MCF 10A (cell line): ENCODE measurements at regions of chr1 and their contacts with region 1.

Region 1: GRCh38 chr1:62082456-62083363 is 111.9 kb upstream of the L1TD1 start:
- DNase-seq: peak; percentile 55
- H3K4me3 Mint-ChIP-seq: no peak overlapping the region
- H3K27ac Mint-ChIP-seq: no peak overlapping the region
- H3K4me1 Mint-ChIP-seq: no peaks in the 10 kb centered on the region
- H3K27me3 Mint-ChIP-seq: no peaks in the 10 kb centered on the region
- CTCF ChIP-seq: peak; percentile 79

Region 2: DNA sequence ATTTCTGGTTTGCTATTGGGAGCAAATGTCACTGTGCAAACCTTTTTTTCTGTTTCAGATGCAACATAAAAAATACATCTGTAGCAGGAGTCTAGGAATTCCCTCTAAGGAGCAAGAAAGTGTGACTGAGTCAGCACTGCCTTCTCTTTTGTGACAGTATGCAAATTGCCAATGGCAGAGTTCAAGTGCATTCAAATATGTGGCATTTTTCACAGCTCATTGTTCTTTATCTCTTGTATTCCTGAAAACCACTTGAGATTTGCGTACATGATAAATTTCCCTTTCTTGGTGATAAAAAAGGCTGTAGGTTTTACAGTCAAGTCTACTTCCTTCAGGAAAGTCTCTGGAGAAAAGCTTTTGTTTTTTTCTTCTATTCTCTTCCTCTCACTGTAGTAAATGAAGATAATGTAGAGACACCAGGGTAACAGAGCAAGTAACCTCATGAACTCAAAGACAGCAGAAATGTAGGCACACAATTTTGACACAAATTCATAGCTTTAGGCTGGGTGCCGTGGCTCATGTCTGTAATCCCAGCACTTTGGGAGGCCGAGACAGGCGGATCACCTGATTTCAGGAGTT is 17.8 kb before region 1 on chr1:
- CTCF ChIA-PET with region 1: interaction called, 24 read pairs
- POLR2A ChIA-PET with region 1: no interaction called
- intact Hi-C with region 1: no loop called
- DNase-seq: no peak
- H3K4me3 Mint-ChIP-seq: no peak overlapping the region
- H3K27ac Mint-ChIP-seq: no peak overlapping the region
- H3K4me1 Mint-ChIP-seq: no peaks in the 10 kb centered on the region
- H3K27me3 Mint-ChIP-seq: no peaks in the 10 kb centered on the region
- CTCF ChIP-seq: no peak

Region 3: DNA sequence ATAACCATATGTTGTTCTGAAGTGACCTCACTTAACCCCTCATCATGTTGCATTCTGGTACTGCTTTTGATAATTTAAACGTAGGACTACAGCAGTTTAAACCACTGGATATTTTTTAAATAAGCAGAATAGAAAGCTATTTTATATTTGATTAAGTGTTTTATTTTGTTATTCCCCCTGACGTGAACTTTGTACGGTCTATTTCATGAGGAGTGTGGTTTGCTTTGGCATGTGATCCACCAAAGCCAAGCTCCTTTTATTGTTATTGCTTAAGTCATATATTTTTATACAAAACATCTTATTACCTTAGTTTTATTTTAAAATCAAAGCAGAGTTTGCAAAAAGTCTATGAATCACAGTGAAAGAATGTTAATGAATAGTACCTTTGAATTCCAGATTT is 10.6 kb after region 1 on chr1:
- CTCF ChIA-PET with region 1: interaction called, 95 read pairs
- POLR2A ChIA-PET with region 1: interaction called, 6 read pairs
- intact Hi-C with region 1: no loop called
- DNase-seq: no peak
- H3K4me3 Mint-ChIP-seq: no peak overlapping the region
- H3K27ac Mint-ChIP-seq: no peak overlapping the region
- H3K4me1 Mint-ChIP-seq: no peaks in the 10 kb centered on the region
- H3K27me3 Mint-ChIP-seq: no peaks in the 10 kb centered on the region
- CTCF ChIP-seq: no peak

Region 4: DNA sequence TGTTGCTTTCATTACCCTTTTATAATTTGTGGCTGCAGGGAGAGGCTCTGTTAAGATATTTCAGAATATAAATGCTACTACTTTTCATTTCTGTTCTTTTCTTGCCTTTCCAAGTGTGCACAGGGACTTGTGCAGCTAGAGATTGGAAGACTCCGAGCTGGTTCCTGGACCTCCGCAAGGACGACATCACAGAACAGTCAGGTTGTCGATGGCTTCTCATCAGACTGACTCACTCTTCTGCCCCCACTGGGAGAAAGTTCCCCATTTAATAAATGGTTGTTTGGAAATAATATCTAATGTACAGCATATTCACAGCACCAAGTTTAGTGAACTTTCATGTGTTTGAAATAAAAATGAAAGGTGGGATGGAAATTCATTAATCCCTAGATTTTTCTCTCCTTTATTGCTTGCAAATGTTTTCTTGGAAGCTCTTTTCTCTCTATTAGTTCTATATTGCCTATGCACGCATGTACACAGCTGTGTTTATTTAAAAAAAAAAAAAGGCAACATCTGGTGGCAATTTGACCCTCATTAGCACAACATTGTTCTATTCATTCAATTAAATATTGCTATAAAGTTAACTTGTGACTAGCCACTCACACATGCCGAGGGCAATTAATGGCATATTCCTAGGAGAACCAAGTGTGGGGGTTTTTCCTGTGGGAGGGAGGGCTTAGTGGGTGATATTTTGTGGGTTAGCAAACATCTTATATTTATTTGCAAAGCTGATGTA is 34.5 kb after region 1 on chr1:
- CTCF ChIA-PET with region 1: interaction called, 16 read pairs
- POLR2A ChIA-PET with region 1: no interaction called
- intact Hi-C with region 1: no loop called
- DNase-seq: no peak
- H3K4me3 Mint-ChIP-seq: no peak overlapping the region
- H3K27ac Mint-ChIP-seq: no peak overlapping the region
- H3K4me1 Mint-ChIP-seq: no peaks in the 10 kb centered on the region
- H3K27me3 Mint-ChIP-seq: no peaks in the 10 kb centered on the region
- CTCF ChIP-seq: no peak

Region 5: DNA sequence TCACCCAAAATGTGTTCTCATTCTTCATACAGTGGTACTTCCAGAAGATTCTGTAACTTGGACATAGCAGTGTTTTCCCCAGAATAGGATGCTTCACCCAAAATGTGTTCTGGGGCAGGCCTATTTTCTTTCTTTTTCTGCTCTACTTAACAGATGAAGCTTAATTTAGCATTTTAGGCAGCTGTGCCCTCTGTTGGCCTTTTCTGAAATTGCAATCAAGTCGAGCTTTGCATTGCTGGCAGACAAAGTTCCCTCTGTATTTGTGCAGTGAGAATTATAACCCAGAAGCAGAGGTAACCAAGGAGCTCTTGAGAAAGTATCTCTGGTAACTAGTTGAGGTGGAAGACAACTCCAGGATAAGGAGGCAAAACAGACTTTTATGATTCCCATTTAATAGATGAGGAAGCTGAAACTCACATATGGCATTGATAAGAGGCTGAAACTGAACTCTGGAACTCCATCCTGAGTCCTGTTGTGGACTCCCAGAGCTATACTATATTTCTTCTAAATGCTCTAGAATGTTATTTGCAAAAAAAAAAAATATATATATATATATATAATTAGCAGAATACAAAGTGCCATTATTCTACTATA is 61.6 kb after region 1 on chr1:
- CTCF ChIA-PET with region 1: interaction called, 23 read pairs
- POLR2A ChIA-PET with region 1: no interaction called
- intact Hi-C with region 1: no loop called
- DNase-seq: peak; percentile 60
- H3K4me3 Mint-ChIP-seq: no peak overlapping the region
- H3K27ac Mint-ChIP-seq: no peak overlapping the region
- H3K4me1 Mint-ChIP-seq: peaks cover 6% of the 10 kb centered on the region
- H3K27me3 Mint-ChIP-seq: no peaks in the 10 kb centered on the region
- CTCF ChIP-seq: peak; percentile 62